ENCODE measurements at regions of chr4 and their contacts with region 1.

Region 1: DNA sequence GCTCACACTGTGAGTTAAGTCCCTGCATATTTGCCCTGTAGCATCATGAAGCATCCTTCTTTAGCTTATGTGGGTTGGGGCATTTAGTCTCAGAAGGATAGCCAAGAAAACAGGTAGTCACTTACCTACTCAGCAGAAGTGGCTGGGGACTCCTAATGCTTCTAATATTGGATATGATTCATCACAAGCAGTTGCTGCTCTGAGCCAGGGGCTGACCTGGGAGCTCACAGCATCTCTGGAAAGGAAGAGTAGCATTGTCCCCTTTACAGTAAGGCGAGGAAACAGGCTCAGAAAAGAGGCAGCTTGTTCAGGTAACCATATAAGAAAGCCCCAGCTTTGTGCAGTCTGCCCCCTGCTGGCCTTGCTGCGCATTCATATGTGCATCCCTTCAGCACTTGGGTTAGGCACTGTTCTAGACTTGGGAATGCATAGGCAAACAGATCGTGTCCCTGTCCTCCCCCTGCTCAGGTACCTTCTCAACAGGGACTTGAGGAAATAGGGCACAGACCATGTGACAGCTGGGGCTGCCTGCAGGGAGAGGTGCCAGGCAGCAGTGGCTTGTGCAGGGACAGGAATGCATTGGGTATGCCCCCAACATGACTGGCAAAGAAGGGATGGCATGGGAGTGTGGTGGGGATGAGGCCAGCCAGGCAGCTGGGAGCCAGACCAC is 35.7 kb upstream of the TBC1D14 start:
- DNase-seq: peak; percentile 64
- H3K4me3 ChIP-seq: no peak overlapping the region
- H3K27ac ChIP-seq: no peak overlapping the region
- H3K27me3 ChIP-seq: no peaks in the 10 kb centered on the region
- CTCF ChIP-seq: peak; percentile 92

Region 2: DNA sequence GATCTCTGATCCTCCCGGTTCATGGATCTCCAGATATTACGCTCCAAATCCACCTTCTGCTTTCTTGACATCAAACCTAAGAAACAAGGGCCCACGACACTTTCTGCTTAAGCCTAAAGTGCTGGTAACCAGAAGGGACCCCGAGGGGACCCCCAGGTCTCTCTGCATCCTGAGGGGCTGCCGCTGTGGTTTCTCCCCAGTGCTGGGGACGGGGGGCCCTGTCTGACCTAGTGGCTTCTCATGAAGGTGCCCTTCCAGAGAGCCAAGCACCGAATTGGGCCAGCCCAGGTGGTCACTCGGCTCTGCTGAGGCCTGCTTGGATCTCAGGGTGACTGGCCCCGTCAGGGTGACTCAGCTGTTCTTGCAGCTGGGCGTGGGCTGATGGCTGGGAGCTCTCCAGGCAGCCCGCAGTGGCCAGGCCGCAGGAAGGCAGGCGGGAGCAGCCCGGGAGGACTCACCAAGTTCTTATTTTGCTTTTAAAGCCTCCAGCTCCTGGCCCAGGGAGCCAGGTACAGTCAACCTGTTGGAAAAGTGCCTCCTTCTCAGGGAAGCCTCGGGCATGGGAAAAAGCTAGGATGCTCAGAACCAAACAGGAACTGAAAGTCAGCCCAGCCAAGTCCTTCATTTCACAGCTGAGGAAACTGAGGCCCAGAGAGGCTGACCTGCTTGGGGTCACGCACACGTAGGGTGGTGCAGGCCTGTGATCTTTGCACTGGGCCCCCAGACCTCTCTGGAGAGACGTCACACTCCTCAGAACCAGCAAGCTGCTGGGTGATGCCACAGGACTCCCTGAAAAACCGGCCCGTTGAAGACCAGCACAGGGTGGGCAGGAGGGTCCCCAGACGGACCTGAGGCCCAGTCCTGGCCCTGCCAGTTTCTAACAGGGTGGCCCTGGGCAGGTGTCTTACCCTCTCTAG is 141.2 kb before region 1 on chr4:
- in situ Hi-C with region 1: loop called (anchors 25 kb)
- DNase-seq: peak; percentile 85
- H3K4me3 ChIP-seq: no peak overlapping the region
- H3K27ac ChIP-seq: peak overlapping the region; percentile 89
- H3K27me3 ChIP-seq: no peaks in the 10 kb centered on the region
- CTCF ChIP-seq: peak; percentile 21

Region 3: GRCh38 chr4:6779667-6780555 is 94.0 kb before region 1 on chr4:
- in situ Hi-C with region 1: no loop called
- DNase-seq: no peak
- H3K4me3 ChIP-seq: no peak overlapping the region
- H3K27ac ChIP-seq: no peak overlapping the region
- H3K27me3 ChIP-seq: no peaks in the 10 kb centered on the region
- CTCF ChIP-seq: peak; percentile 34

Region 4: GRCh38 chr4:7007944-7008343 is 134.0 kb after region 1 on chr4:
- in situ Hi-C with region 1: no loop called
- DNase-seq: no peak
- H3K4me3 ChIP-seq: no peak overlapping the region
- H3K27ac ChIP-seq: no peak overlapping the region
- H3K27me3 ChIP-seq: no peaks in the 10 kb centered on the region
- CTCF ChIP-seq: no peak